HEK293T (cell line): ENCODE measurements at regions of chr19 and their contacts with region 1.

Region 1: DNA sequence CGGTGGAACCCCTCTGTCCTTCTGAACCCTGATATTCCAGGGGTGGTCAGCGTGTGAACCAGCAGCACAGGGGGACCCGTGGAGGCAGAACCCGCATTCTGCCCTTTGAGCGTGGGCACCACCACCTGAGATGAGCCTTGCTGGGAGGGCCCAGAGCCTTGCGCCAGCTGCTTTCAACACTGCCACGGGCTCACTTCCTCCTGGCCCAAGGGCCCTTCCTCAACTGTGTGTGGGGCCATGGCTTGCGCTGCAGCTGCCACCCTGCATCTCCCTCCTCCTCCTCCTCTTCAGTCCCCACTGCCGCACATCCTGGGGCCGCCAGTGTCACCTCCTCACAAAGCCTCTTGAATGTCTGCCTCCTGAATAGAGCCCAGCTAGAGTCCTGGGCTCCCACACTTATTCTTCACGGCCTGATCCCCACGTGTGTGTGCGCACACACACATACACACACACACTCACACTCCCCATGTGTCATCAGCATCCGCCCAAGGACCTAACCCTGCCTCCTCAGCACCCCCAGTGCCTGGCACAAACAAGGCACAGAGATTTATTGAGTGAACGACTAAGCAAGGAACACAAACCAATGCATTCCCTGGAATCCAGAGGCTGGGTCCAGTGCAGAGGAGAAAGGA is 26.9 kb upstream of the TMEM160 start:
- DNase-seq: no peak

Region 2: GRCh38 chr19:47013041-47013517 is 62.2 kb before region 1 on chr19:
- CTCF ChIA-PET with region 1: interaction called, 11 read pairs
- POLR2A ChIA-PET with region 1: no interaction called
- DNase-seq: peak; percentile 89

Region 3: GRCh38 chr19:47105874-47106273 is 30.6 kb after region 1 on chr19:
- CTCF ChIA-PET with region 1: no interaction called
- POLR2A ChIA-PET with region 1: no interaction called
- DNase-seq: no peak

Region 4: GRCh38 chr19:47124937-47125668 is 49.8 kb after region 1 on chr19:
- CTCF ChIA-PET with region 1: interaction called, 10 read pairs
- POLR2A ChIA-PET with region 1: interaction called, 3 read pairs
- DNase-seq: peak; percentile 65